KBM-7 (cell line): ENCODE measurements at regions of chr9 and their contacts with region 1.

Region 1: GRCh38 chr9:123349691-123350480 is 6.1 kb upstream of the CRB2 start:
- DNase-seq: peak; percentile 86

Region 2: GRCh38 chr9:123081824-123082223 is 268.1 kb before region 1 on chr9:
- in situ Hi-C with region 1: loop called (anchors 10 kb)
- DNase-seq: peak; percentile 70

Region 3: GRCh38 chr9:123401879-123402513 is 52.1 kb after region 1 on chr9:
- in situ Hi-C with region 1: no loop called
- DNase-seq: peak; percentile 58

Region 4: DNA sequence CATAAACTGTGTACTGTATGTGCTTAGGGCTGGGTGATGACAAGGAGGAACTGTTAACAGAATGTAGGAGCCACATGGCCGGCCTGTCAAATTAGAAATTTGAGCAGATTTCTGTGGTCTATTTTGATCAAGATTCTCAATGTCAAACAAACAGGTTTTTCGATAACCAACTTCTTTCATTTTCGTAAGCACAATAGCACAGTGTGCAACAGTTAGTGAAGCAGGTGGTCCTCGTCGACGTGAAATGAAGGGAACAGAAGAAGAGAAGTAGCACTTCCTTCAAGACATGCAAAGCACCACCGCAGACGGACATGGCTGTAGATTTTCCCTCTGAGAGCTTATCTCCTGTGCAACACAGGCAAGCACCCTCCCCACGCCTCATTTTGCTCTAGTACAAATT is 258.2 kb after region 1 on chr9:
- in situ Hi-C with region 1: no loop called
- DNase-seq: no peak

Region 5: DNA sequence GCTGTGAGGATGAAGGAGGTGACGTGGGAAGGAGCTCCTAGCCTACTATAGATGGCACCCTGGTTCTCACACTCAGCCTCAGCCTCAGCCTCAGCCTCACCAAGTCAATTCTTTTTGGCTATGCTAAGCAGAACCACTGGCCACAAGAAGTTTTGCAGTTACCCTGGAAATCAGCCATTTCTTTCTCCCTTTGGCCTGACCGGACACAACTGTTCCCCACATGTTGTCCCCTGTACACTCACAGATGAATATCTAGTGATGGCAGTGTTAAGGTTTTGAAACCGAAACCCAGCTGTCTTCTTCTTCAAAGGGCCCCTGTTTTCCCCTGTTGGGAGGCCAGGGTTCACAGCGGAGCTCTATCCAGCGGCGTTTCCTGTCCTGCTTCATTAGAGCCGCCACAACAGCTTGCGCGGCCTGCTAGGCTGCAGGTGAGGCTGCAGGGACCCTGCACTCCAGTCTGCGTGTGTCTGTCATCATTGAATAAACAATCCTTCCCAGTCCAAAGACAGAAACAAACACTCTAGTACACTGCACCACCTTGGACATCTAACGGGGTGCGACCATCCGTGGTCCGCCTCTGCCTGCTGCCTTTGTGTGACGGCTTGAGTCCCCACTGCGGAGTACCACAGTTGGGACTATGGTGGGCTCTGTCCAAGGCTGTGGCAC is 329.6 kb after region 1 on chr9:
- in situ Hi-C with region 1: no loop called
- DNase-seq: no peak